ENCODE measurements at regions of chr6 and their contacts with region 1.

Region 1: DNA sequence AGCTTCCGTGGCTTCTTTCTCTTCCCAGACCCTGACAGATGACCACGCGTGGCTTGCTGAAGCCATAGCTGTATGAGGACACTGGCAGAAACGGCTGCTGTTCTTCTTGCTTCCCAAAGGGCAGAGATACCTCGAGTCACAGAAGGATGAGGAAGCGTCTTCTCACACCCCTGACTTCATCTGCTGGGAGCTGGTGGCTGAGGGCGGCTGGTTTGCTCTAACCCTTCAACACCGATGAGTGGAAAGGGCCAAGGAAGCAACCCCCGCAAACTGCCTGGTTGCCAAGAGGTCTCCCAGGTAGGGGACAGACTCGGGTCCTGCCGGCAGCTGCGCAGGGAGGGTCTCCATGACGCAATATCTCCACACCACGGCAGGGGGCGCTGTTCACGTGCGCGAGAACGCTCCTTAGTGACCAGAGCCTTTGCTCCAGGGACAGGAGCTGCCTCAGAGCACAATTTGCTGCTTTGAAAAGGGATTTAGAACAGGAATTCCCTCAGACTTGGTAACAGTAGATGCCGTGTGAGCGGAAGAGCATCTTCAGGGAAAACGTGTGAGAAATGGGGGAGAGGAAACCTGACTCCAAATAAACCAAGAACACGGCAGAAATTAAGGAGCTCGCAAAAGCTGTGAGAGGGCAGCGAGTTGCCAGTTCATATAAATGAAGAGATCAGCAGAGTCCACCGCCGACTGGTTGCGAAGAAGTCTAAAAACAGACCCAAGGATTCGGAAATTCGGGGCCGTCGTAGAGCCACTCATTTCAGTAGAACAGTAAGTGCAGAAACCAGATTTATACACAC is 80.2 kb downstream of the ERMARD start:
- DNase-seq: peak; percentile 3
- H3K4me3 ChIP-seq: no peak overlapping the region
- H3K27ac ChIP-seq: no peak overlapping the region
- H3K27me3 ChIP-seq: peaks cover 3% of the 10 kb centered on the region
- CTCF ChIP-seq: peak; percentile 91

Region 2: GRCh38 chr6:169806701-169807100 is 24.9 kb before region 1 on chr6:
- CTCF ChIA-PET with region 1: interaction called, 30 read pairs
- POLR2A ChIA-PET with region 1: no interaction called
- DNase-seq: no peak
- H3K4me3 ChIP-seq: no peak overlapping the region
- H3K27ac ChIP-seq: no peak overlapping the region
- H3K27me3 ChIP-seq: peaks cover 10% of the 10 kb centered on the region
- CTCF ChIP-seq: no peak

Region 3: GRCh38 chr6:169845426-169846285 is 14.0 kb after region 1 on chr6:
- CTCF ChIA-PET with region 1: interaction called, 30 read pairs
- POLR2A ChIA-PET with region 1: no interaction called
- DNase-seq: no peak
- H3K4me3 ChIP-seq: no peak overlapping the region
- H3K27ac ChIP-seq: no peak overlapping the region
- H3K27me3 ChIP-seq: no peaks in the 10 kb centered on the region
- CTCF ChIP-seq: no peak

Region 4: DNA sequence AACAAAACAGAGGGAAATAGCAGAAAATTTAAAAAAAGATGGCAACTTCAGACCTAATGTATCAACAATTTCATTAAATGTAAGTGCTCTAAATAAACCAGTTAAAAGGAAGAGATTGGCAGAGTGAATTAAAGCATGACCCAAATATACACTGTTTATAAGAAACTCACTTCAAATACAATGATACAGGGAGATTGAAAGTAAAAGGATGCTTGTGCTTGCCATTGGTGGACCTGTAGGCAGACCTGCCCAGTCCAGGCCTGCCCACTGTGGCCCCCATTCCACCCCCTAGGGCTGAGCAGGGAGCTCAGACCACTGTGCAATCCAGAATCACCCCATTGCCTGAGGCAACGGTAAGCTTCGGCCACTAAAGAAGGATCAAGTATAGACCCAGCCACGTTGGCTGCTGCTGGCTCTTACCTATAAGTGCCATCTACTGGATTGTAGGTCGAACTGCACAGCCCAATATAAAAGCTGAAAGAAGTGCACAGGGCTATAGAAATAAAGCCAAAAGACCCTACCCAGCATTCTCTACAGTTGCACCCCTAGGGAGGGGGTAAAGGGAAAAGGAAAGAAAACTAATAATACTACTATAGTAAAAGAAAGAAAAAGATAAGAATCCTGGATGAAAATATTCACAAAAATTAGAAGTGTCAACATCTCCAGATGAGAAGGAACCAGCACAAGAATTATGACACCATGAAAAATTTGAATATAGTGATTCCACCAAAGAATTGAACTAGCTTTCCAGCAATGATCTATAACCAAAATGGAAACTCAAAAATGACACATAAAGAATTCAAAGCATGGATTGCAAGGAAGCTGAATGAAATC is 685.4 kb after region 1 on chr6:
- CTCF ChIA-PET with region 1: interaction called, 81 read pairs
- POLR2A ChIA-PET with region 1: no interaction called
- DNase-seq: peak; percentile 52
- H3K4me3 ChIP-seq: no peak overlapping the region
- H3K27ac ChIP-seq: no peak overlapping the region
- H3K27me3 ChIP-seq: no peaks in the 10 kb centered on the region
- CTCF ChIP-seq: peak; percentile 93

Region 5: GRCh38 chr6:170529839-170530469 is 698.3 kb after region 1 on chr6:
- CTCF ChIA-PET with region 1: interaction called, 143 read pairs
- POLR2A ChIA-PET with region 1: no interaction called
- DNase-seq: peak; percentile 46
- H3K4me3 ChIP-seq: no peak overlapping the region
- H3K27ac ChIP-seq: no peak overlapping the region
- H3K27me3 ChIP-seq: no peaks in the 10 kb centered on the region
- CTCF ChIP-seq: peak; percentile 99

Measured in AG04450 (cell line).